ENCODE measurements at regions of chr19 and their contacts with region 1.

Region 1: DNA sequence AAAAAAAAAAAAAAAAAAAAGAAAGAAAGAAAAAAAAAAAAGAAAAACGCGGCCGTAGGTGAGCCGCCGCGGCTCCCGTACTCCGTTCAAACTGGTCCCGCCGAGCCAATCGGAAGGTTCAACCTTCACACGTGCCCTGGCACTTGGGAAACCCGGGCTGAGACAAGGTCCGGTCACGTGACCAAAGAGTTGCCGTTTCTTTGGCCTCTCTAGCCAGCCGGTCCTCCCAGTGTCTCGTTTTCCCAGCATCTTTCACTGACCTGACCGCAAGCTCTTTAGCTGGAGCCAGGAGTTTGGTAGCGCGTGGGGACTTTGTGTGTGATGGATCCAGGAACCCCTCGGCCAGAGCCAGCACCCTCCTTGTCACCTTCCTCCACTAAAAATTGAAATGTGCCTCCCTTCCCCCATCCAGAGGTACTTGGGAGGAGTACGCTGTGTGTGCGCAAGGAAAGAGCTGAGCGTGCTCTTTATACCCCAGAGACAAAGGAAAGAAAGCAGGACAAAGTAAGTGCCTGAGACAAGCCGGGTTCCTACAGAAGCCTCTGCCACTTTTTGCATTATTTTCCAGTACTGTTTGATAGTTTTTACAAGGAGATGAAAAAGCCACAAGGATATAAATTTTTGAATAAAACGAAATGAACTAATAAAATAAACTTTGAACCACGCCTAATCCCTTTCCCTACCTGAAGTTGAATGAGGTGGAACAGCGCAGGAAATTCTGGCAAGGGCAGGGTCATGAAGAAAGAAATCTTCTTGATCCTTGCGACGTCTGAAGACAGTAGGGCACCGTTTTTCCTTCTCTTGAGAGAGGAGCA is 959 bp downstream of the TNPO2 start:
- DNase-seq: peak; percentile 98
- H3K4me3 Mint-ChIP-seq: peak overlapping the region; percentile 95
- H3K27ac Mint-ChIP-seq: peak overlapping the region; percentile 93
- H3K4me1 Mint-ChIP-seq: peaks cover 33% of the 10 kb centered on the region
- H3K27me3 Mint-ChIP-seq: no peaks in the 10 kb centered on the region

Region 2: GRCh38 chr19:12681074-12681951 is 41.5 kb before region 1 on chr19 and contains the start of gene DHPS:
- intact Hi-C with region 1: loop called (anchors 1 kb)
- DNase-seq: peak; percentile 97
- H3K4me3 Mint-ChIP-seq: peak within 1 kb of the TSS; percentile 94
- H3K27ac Mint-ChIP-seq: peak within 1 kb of the TSS; percentile 92
- H3K4me1 Mint-ChIP-seq: peaks cover 20% of the 10 kb centered on the region
- H3K27me3 Mint-ChIP-seq: no peaks in the 10 kb centered on the region
- total RNA-seq, gene DHPS: 138 and 155 TPM in 2 replicates

Region 3: DNA sequence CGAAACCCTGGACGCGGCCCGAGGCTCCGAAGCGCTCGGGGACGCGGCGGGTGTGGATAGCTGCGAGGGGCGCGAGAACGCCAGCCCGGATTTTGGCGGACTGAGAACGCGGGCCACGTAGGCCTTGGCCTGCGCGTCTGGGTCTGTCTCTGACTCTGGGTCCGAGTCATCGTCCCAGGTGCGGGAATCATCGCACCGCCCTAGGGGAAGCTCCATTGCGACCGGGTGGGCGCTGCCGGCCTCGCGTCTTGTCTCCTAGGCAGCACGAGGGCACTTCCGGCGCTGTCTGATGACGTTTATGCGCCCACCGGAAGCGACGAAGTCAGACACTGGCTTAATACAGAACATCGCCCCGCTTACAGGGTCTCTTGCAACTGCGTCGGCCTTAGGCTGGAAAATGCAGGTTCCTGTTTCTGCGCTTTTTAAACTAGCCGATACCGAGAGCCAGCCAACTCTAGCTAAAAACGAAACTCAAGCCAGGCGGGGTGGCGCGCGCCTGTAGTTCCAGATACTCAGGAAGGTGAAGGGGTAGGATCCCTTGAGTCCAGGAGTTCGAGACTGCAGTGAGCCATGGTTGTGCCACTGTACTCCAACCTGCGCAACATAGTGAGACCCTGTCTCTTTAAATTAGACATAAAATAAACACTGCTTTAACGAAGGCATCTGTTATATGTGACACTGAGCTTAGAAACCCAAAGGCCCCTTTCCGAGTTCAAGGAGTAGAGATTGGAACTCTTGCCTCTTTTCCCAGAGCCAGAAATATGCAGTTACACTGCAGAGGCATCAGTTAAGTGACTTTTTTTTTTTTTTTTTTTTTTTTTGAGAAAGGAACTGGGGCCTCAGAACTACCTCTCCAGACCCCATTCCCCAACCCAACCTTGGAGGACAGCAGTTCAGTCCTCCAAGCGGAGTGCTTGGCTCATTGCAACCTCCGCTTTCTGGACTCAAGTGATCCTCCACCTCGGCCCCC is 26.1 kb before region 1 on chr19 and contains the start of gene FBXW9:
- intact Hi-C with region 1: loop called (anchors 1 kb)
- DNase-seq: peak; percentile 99
- H3K4me3 Mint-ChIP-seq: peak within 1 kb of the TSS; percentile 90
- H3K27ac Mint-ChIP-seq: peak within 1 kb of the TSS; percentile 94
- H3K4me1 Mint-ChIP-seq: peaks cover 8% of the 10 kb centered on the region
- H3K27me3 Mint-ChIP-seq: no peaks in the 10 kb centered on the region
- total RNA-seq, gene FBXW9: 12.4 and 12.9 TPM in 2 replicates

Region 4: DNA sequence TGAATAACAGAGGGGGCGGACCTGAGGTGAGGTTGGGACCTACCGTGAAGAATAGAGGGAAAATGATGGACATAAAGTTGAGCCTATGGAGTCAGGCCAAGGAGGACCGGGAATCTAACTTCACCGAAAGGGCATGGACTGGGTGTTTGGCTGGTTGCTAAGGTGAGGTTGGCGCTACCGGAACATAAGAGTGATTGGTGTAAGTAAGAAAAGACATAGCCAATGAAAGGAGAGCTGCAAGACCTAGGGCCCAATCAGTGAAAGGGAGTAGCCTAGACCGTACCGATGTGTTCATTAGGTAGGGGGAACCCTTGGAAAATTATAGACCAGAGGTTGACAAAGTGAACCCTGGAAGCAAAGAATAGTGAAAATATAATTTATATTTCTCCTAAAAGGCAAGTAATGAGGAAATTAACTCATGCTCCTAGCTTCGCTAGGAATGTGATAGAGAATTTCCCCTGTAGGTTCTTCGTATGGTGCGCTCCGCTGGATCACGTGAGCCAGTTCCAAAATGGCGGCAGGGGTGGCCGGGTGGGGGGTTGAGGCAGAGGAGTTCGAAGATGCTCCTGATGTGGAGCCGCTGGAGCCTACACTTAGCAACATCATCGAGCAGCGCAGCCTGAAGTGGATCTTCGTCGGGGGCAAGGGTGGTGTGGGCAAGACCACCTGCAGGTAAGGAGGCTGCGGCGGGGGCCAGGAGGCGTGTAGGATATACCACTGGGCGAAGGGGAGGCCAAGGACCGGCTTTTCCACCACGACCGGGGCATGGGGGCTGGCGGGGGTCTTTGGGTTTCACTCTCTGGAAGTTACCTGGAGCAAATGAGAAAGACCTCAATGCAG is 14.4 kb after region 1 on chr19 and contains the start of gene GET3:
- intact Hi-C with region 1: loop called (anchors 1 kb)
- DNase-seq: peak; percentile 94
- H3K4me3 Mint-ChIP-seq: peak within 1 kb of the TSS; percentile 100
- H3K27ac Mint-ChIP-seq: peak within 1 kb of the TSS; percentile 98
- H3K4me1 Mint-ChIP-seq: peaks cover 38% of the 10 kb centered on the region
- H3K27me3 Mint-ChIP-seq: no peaks in the 10 kb centered on the region
- total RNA-seq, gene GET3: 64.6 and 67.3 TPM in 2 replicates

Region 5: GRCh38 chr19:12789904-12790619 is 67.3 kb after region 1 on chr19:
- intact Hi-C with region 1: loop called (anchors 5 kb)
- DNase-seq: peak; percentile 99
- H3K4me3 Mint-ChIP-seq: peak overlapping the region; percentile 96
- H3K27ac Mint-ChIP-seq: peak overlapping the region; percentile 97
- H3K4me1 Mint-ChIP-seq: peaks cover 30% of the 10 kb centered on the region
- H3K27me3 Mint-ChIP-seq: no peaks in the 10 kb centered on the region